ENCODE measurements at regions of chr11 and their contacts with region 1.

Region 1: DNA sequence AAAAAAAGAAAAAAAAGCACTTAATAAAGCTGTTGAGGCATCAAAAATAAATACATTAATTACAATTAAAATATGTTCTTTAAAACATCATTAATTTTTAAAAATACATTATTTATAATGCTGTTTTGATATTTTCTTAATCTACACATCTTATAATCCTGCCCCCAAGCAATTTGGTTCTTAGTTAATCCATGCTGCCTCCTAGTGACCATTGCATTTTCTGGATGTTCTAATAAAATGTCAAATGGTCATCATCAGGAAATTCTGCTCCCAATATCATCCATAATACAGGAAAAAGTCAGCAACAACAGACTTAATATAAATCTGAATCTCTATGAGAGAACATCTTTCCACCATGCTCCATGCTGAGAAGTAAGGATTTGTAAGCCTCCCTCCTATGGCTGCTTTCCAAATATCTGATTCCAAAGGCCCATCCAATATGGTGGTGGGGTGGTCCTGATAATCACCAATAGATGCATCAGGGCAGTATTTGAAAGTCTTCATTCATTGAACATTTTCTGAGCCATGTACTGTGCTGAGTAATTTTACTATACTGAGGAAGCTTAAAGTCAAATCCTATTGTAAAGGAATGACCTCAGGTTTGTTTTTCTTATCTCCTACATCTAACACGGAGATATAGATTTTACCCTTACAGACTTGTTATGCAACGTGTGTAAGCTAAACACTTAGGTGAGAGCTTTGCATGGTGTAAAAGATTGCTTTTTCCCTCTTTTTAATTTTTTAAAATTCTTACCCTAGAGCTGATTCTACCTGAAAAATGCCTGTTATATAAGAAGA is 124.7 kb upstream of the BMAL1 start:
- DNase-seq: peak; percentile 60
- H3K4me3 Mint-ChIP-seq: no peak overlapping the region
- H3K27ac Mint-ChIP-seq: no peak overlapping the region
- H3K4me1 Mint-ChIP-seq: no peaks in the 10 kb centered on the region
- H3K27me3 Mint-ChIP-seq: no peaks in the 10 kb centered on the region
- CTCF ChIP-seq: peak; percentile 55

Region 2: GRCh38 chr11:13016415-13016814 is 136.5 kb before region 1 on chr11:
- CTCF ChIA-PET with region 1: interaction called, 6 read pairs
- POLR2A ChIA-PET with region 1: no interaction called
- intact Hi-C with region 1: loop called (anchors 1 kb)
- DNase-seq: peak; percentile 69
- H3K4me3 Mint-ChIP-seq: no peak overlapping the region
- H3K27ac Mint-ChIP-seq: no peak overlapping the region
- H3K4me1 Mint-ChIP-seq: no peaks in the 10 kb centered on the region
- H3K27me3 Mint-ChIP-seq: peaks cover 32% of the 10 kb centered on the region
- CTCF ChIP-seq: peak; percentile 28

Region 3: GRCh38 chr11:13082588-13082987 is 70.3 kb before region 1 on chr11:
- CTCF ChIA-PET with region 1: no interaction called
- POLR2A ChIA-PET with region 1: no interaction called
- intact Hi-C with region 1: no loop called
- DNase-seq: no peak
- H3K4me3 Mint-ChIP-seq: no peak overlapping the region
- H3K27ac Mint-ChIP-seq: no peak overlapping the region
- H3K4me1 Mint-ChIP-seq: no peaks in the 10 kb centered on the region
- H3K27me3 Mint-ChIP-seq: peaks cover 25% of the 10 kb centered on the region
- CTCF ChIP-seq: no peak

Region 4: DNA sequence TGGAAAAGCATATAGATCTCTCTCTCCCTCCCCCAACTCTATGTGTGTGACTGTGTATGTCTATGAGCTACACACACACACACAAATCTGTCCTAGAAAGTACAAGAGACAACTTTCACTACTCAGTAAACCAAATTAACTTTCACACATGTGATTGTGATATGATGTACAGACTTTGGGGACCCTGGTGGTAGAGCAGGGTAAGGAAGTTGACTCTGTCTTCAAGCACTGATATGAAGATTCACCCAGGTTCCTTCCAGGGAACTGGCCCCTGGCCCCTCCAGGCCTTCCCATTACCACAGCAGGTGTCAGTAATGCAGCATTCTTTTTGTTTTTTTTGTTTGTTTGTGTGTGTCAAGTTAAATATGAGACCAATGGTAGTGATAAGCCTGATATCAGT is 408.9 kb after region 1 on chr11:
- CTCF ChIA-PET with region 1: no interaction called
- POLR2A ChIA-PET with region 1: no interaction called
- intact Hi-C with region 1: no loop called
- DNase-seq: no peak
- H3K4me3 Mint-ChIP-seq: no peak overlapping the region
- H3K27ac Mint-ChIP-seq: no peak overlapping the region
- H3K4me1 Mint-ChIP-seq: no peaks in the 10 kb centered on the region
- H3K27me3 Mint-ChIP-seq: peaks cover 15% of the 10 kb centered on the region
- CTCF ChIP-seq: no peak

Measured in MCF 10A (cell line).